Esophagus squamous epithelium (tissue), 5 donors: ENCODE measurements at regions of chr14 and their contacts with region 1.

Region 1: GRCh38 chr14:60091550-60092530 is at the start of gene PCNX4:
- DNase-seq: peak; percentile 88
- H3K4me3 ChIP-seq: peak within 1 kb of the TSS; percentile 57 to 92 (median 81)
- H3K27ac ChIP-seq: peak within 1 kb of the TSS; percentile 94 to 99 (median 98)
- H3K4me1 ChIP-seq: peaks cover 0 to 48% (median 12%) of the 10 kb centered on the region in 3 donors
- H3K27me3 ChIP-seq: no peaks in the 10 kb centered on the region
- CTCF ChIP-seq: no peak
- POLR2A ChIP-seq: peak in 3 of 4 donors; percentile 65 to 96 (median 73)
- total RNA-seq, gene PCNX4: 9.4 to 31.1 (median 18.7) TPM

Region 2: DNA sequence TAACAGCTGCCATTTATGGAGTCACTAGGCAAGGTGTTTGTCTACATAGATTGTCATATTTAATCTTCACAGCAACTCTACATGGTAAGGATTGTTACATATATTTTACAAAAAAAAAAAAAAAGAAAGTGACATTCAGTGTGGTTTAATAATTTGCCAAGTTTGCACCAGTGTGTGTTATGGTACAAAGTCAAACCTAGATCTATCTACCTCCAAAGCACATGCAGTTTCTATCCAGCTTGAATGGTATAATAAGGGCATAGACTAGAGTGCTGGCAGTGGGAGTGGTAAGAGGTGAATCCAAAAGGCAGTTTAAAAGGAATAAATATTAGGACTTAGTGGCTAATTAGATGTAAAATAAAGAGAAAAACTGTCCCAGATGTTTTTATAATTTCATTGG is 66.3 kb before region 1 on chr14:
- intact Hi-C with region 1: no loop called
- DNase-seq: no peak
- H3K4me3 ChIP-seq: no peak overlapping the region
- H3K27ac ChIP-seq: no peak overlapping the region
- H3K4me1 ChIP-seq: no peaks in the 10 kb centered on the region
- H3K27me3 ChIP-seq: no peaks in the 10 kb centered on the region
- CTCF ChIP-seq: no peak
- POLR2A ChIP-seq: no peak

Region 3: DNA sequence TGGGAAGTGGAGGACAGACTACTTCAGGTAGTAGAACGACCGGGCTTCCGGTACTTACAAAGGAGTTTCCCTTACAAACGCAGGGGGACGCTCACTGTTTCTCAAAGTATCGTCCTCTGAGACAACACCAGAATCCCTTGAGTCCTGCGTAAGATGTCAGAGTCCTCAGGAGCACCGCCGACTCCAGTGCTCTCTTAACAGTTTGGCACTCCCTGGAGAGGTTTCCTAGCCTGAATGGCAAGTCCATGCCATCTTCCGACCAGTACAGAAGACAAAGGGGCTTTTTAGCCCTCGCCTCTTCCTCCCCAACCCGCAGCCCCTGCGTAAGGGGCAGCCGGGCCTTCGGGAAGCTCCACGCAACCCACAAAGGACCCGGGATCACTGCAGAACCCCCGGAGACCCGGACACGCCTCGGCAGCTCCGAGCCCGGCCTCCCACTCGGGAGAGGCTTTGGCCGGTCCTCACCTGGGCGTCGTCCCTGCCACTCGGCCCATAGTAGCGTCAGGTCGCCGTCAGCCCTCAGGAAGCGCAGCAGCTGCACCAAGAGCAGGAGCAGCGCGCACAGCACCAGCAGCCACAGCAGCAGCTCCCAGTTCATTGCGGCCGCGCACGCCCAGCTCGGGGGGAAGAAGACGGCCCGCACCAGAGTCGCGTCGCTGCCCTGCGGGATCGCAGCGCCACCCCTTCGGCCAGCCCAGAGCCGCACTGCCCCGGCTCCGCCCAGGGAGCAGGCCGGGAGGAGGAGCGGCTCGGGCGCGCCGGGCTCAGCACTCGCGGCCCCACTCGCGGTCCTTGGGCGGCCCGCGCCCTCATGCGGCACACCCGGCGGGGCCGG is 73.1 kb after region 1 on chr14 and contains the start of gene DHRS7:
- intact Hi-C with region 1: loop called (anchors 10 kb)
- DNase-seq: no peak
- H3K4me3 ChIP-seq: peak within 1 kb of the TSS; percentile 72 to 89 (median 82)
- H3K27ac ChIP-seq: peak within 1 kb of the TSS; percentile 91 to 97 (median 95)
- H3K4me1 ChIP-seq: peaks cover 9 to 56% (median 18%) of the 10 kb centered on the region in 3 donors
- H3K27me3 ChIP-seq: no peaks in the 10 kb centered on the region
- CTCF ChIP-seq: peak in 5 of 6 experiments; percentile 39 to 60 (median 49)
- POLR2A ChIP-seq: peak in 2 of 4 donors; percentile 55 to 71
- total RNA-seq, gene DHRS7: 43.1 to 82.0 (median 60.1) TPM

Region 4: GRCh38 chr14:60248697-60249318 is 157.0 kb after region 1 on chr14 and contains the start of gene PPM1A:
- intact Hi-C with region 1: loop called (anchors 10 kb)
- DNase-seq: peak; percentile 78
- H3K4me3 ChIP-seq: peak within 1 kb of the TSS; percentile 75 to 94 (median 89)
- H3K27ac ChIP-seq: peak within 1 kb of the TSS; percentile 96 to 100 (median 99)
- H3K4me1 ChIP-seq: peaks cover 0 to 55% (median 10%) of the 10 kb centered on the region in 3 donors
- H3K27me3 ChIP-seq: no peaks in the 10 kb centered on the region
- CTCF ChIP-seq: peak in 1 of 6 experiments; percentile 9
- POLR2A ChIP-seq: peak in 3 of 4 donors; percentile 83 to 97 (median 90)
- total RNA-seq, gene PPM1A: 16.7 to 34.3 (median 22.7) TPM

Region 5: GRCh38 chr14:60922050-60922449 is 830.2 kb after region 1 on chr14:
- intact Hi-C with region 1: no loop called
- DNase-seq: no peak
- H3K4me3 ChIP-seq: no peak overlapping the region
- H3K27ac ChIP-seq: no peak overlapping the region
- H3K4me1 ChIP-seq: no peaks in the 10 kb centered on the region
- H3K27me3 ChIP-seq: no peaks in the 10 kb centered on the region
- CTCF ChIP-seq: no peak
- POLR2A ChIP-seq: no peak